Endothelial cell of umbilical vein (primary cell): ENCODE measurements at regions of chr12 and their contacts with region 1.

Region 1: DNA sequence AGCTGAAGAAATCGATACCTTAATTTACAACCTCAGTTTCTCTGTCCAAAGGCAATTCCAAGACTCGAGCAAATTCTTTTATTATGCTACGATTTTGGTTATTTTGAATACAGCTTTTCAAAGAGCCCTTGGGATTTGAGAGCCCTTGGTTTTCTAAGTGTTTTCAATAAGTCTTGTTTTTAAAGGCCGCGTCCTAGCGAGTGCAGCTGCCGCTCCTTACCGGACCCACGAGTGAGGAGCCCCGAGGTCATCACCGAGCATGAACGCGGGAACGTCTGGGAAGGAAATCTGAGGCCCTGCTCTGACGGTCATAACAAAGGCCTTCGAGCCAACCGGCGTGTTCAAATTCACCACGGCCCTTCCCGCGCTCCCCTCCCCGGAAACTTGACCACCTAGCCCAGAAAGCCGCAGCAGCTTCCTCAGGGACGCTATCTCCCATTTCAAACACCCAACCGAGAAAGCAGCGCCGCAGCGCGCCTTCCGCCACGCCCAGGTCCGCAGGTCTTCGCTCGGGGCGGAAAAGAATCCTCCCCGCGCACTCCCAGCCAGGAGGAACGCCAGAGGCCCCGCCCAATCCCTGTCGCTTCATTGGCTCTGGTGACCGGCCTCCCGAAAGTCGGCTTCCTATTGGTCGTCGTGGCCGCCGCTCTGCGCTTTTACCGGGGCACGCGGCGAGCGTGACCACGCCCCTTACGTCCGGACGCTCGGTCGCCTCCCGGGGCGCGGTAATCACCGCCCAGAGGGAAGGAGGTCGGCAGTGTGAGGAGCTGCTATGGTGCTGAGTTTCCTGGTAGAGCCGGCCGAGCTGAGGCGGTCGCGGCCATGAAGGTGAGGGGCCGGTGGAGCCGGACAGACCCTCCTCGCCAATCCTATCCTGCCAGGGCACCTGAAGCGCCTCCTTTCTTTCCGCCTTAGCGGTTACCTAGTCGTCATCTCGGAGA is at the start of gene RNF34:
- DNase-seq: peak; percentile 98
- H3K4me3 ChIP-seq: peak within 1 kb of the TSS; percentile 68 to 86 (median 86)
- H3K27ac ChIP-seq: peak within 1 kb of the TSS; percentile 55
- H3K4me1 ChIP-seq: peaks cover 19% of the 10 kb centered on the region
- H3K27me3 ChIP-seq: no peaks in the 10 kb centered on the region
- CTCF ChIP-seq: no peak
- POLR2A ChIP-seq: peak; percentile 97
- total RNA-seq, gene RNF34: 51.1 and 57.1 TPM in 2 replicates

Region 2: DNA sequence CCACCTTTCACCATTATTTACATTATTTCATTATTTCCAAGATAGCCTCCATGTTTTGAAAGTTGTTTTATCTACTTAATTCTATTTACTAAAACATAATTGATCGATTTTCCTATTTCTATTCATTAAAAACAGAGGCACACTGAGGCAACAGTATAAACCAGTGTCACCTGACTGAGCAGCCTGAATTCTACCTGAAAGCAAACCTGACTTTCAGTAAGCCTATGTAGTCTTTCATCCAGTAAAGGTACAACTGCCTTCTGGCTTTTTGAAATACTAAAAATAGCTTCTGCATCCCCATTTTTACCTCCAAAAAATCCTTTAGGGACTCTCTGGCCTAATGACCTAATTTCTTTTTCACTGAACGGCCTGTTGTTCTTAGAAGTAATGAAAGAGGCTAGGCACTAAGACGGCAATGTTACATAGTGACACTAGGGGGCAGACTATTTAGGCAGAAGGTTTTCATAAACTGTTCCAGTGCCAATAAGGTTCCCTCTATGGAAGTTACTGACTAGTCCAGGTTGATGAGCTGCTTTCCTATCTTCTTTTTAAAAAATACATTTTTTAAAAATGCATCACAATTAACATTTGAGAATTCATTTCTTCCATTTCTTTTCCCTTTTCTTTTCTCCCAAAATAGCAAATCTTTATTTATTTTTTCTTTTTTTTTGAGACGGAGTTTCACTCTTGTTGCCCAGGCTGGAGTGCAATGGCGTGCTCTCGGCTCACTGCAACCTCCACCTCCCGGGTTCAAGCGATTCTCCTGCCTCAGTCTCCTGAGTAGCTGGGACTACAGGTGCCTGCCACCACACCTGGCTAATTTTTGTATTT is 64.9 kb before region 1 on chr12:
- CTCF ChIA-PET with region 1: interaction called, 21 read pairs
- POLR2A ChIA-PET with region 1: no interaction called
- dilution Hi-C with region 1: no loop called
- intact Hi-C with region 1: loop called (anchors 5 kb)
- DNase-seq: peak; percentile 65
- H3K4me3 ChIP-seq: no peak overlapping the region
- H3K27ac ChIP-seq: no peak overlapping the region
- H3K4me1 ChIP-seq: no peaks in the 10 kb centered on the region
- H3K27me3 ChIP-seq: no peaks in the 10 kb centered on the region
- CTCF ChIP-seq: peak; percentile 66 to 72
- POLR2A ChIP-seq: no peak

Region 3: GRCh38 chr12:121351820-121352681 is 47.6 kb before region 1 on chr12 and contains the start of gene ANAPC5:
- CTCF ChIA-PET with region 1: interaction called, 8 read pairs
- POLR2A ChIA-PET with region 1: interaction called, 12 read pairs
- dilution Hi-C with region 1: no loop called
- intact Hi-C with region 1: loop called (anchors 1 kb)
- DNase-seq: peak; percentile 99
- H3K4me3 ChIP-seq: peak within 1 kb of the TSS; percentile 54 to 85 (median 56)
- H3K27ac ChIP-seq: peak within 1 kb of the TSS; percentile 40
- H3K4me1 ChIP-seq: peaks cover 10% of the 10 kb centered on the region
- H3K27me3 ChIP-seq: no peaks in the 10 kb centered on the region
- CTCF ChIP-seq: peak in 1 of 2 donors; percentile 10
- POLR2A ChIP-seq: peak; percentile 94
- total RNA-seq, gene ANAPC5: 129 and 133 TPM in 2 replicates

Region 4: GRCh38 chr12:121388421-121388981 is 11.2 kb before region 1 on chr12:
- CTCF ChIA-PET with region 1: interaction called, 7 read pairs
- POLR2A ChIA-PET with region 1: interaction called, 5 read pairs
- dilution Hi-C with region 1: no loop called
- intact Hi-C with region 1: loop called (anchors 1 kb)
- DNase-seq: peak; percentile 38
- H3K4me3 ChIP-seq: no peak overlapping the region
- H3K27ac ChIP-seq: no peak overlapping the region
- H3K4me1 ChIP-seq: peaks cover 6% of the 10 kb centered on the region
- H3K27me3 ChIP-seq: no peaks in the 10 kb centered on the region
- CTCF ChIP-seq: no peak
- POLR2A ChIP-seq: no peak

Region 5: GRCh38 chr12:121467115-121467793 is 67.6 kb after region 1 on chr12:
- CTCF ChIA-PET with region 1: no interaction called
- POLR2A ChIA-PET with region 1: interaction called, 4 read pairs
- dilution Hi-C with region 1: no loop called
- intact Hi-C with region 1: loop called (anchors 2 kb)
- DNase-seq: peak; percentile 87
- H3K4me3 ChIP-seq: peak overlapping the region; percentile 6 to 65 (median 46)
- H3K27ac ChIP-seq: peak overlapping the region; percentile 53
- H3K4me1 ChIP-seq: peaks cover 10% of the 10 kb centered on the region
- H3K27me3 ChIP-seq: no peaks in the 10 kb centered on the region
- CTCF ChIP-seq: no peak
- POLR2A ChIP-seq: peak; percentile 42

Region 6: GRCh38 chr12:121538699-121539061 is 139.0 kb after region 1 on chr12:
- CTCF ChIA-PET with region 1: no interaction called
- POLR2A ChIA-PET with region 1: no interaction called
- dilution Hi-C with region 1: no loop called
- intact Hi-C with region 1: no loop called
- DNase-seq: no peak
- H3K4me3 ChIP-seq: no peak overlapping the region
- H3K27ac ChIP-seq: no peak overlapping the region
- H3K4me1 ChIP-seq: peaks cover 20% of the 10 kb centered on the region
- H3K27me3 ChIP-seq: no peaks in the 10 kb centered on the region
- CTCF ChIP-seq: no peak
- POLR2A ChIP-seq: no peak